ENCODE measurements at regions of chr17 and their contacts with region 1.

Region 1: GRCh38 chr17:57243171-57243948 is 13.0 kb upstream of the MSI2 start:
- DNase-seq: peak; percentile 82
- ATAC-seq: peak; percentile 94
- H3K4me3 Mint-ChIP-seq: no peak overlapping the region
- H3K27ac Mint-ChIP-seq: peak overlapping the region; percentile 40
- H3K4me1 Mint-ChIP-seq: peaks cover 3% of the 10 kb centered on the region
- H3K27me3 Mint-ChIP-seq: peaks cover 2% of the 10 kb centered on the region
- CTCF ChIP-seq: peak; percentile 100

Region 2: DNA sequence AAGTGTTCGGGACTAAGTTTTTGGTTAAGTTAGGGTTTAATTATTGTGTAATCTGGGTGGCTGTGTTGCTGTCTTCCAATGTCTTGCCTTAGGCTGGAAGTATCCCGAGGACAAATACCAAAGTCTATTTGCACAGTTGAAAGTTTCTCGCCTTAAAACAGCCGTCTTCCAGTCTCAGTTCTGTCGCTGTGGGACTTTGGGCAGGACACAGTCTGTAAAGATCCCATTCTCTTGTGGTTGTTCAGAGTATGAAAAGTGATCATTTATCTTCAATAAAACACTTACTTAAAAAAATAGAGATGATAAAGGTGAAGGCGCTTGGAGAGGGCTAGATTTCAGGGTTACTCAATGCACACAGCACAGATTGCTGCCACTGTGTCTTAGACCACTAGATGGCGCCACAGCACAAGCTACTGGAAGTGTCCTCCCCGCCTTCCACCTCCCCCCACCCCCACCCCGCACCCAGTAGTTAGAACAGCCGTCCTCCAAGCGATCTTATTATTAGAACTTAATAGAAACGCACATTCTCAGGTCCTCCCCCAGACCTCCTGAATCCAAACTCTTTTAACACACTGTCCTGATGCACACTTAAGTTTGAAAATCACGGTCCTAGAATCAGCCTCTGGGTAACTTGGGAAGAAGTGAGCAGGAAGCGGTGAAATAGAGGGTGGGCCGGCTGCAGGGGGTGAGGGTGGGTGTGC is 112.4 kb before region 1 on chr17:
- CTCF ChIA-PET with region 1: interaction called, 12 read pairs
- POLR2A ChIA-PET with region 1: no interaction called
- intact Hi-C with region 1: no loop called
- DNase-seq: peak; percentile 90
- ATAC-seq: peak; percentile 91
- H3K4me3 Mint-ChIP-seq: no peak overlapping the region
- H3K27ac Mint-ChIP-seq: no peak overlapping the region
- H3K4me1 Mint-ChIP-seq: peaks cover 6% of the 10 kb centered on the region
- H3K27me3 Mint-ChIP-seq: no peaks in the 10 kb centered on the region
- CTCF ChIP-seq: peak; percentile 87

Region 3: DNA sequence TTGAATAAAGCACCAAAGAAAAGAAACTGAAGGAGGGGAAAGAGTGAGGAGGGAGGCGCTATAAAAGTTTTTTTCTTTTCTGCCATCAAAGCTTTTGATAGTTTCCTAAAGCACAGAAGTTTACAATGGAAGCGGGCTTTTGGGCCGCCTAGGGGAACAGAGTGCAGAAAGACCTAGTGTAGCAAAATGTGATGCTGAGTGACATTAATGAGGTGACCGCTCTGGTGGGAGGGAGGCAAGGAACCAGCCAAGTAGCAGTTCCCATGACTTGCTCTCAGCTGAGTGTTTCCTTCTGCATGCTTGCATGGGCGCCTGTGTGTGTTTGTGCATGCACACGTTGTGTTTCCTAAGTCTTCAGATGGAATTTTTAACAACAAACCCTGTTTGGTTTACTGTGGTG is 28.5 kb after region 1 on chr17:
- CTCF ChIA-PET with region 1: interaction called, 33 read pairs
- POLR2A ChIA-PET with region 1: no interaction called
- intact Hi-C with region 1: no loop called
- DNase-seq: no peak
- ATAC-seq: no peak
- H3K4me3 Mint-ChIP-seq: no peak overlapping the region
- H3K27ac Mint-ChIP-seq: no peak overlapping the region
- H3K4me1 Mint-ChIP-seq: peaks cover 45% of the 10 kb centered on the region
- H3K27me3 Mint-ChIP-seq: no peaks in the 10 kb centered on the region
- CTCF ChIP-seq: no peak

Region 4: GRCh38 chr17:57401556-57402488 is 158.5 kb after region 1 on chr17:
- CTCF ChIA-PET with region 1: interaction called, 32 read pairs
- POLR2A ChIA-PET with region 1: no interaction called
- intact Hi-C with region 1: no loop called
- DNase-seq: no peak
- ATAC-seq: no peak
- H3K4me3 Mint-ChIP-seq: no peak overlapping the region
- H3K27ac Mint-ChIP-seq: no peak overlapping the region
- H3K4me1 Mint-ChIP-seq: peaks cover 12% of the 10 kb centered on the region
- H3K27me3 Mint-ChIP-seq: no peaks in the 10 kb centered on the region
- CTCF ChIP-seq: no peak

Region 5: GRCh38 chr17:57455063-57455914 is 211.9 kb after region 1 on chr17:
- CTCF ChIA-PET with region 1: interaction called, 17 read pairs
- POLR2A ChIA-PET with region 1: no interaction called
- intact Hi-C with region 1: no loop called
- DNase-seq: peak; percentile 81
- ATAC-seq: peak; percentile 73
- H3K4me3 Mint-ChIP-seq: peak overlapping the region; percentile 57
- H3K27ac Mint-ChIP-seq: peak overlapping the region; percentile 94
- H3K4me1 Mint-ChIP-seq: peaks cover 68% of the 10 kb centered on the region
- H3K27me3 Mint-ChIP-seq: no peaks in the 10 kb centered on the region
- CTCF ChIP-seq: no peak

Region 6: GRCh38 chr17:57552114-57552624 is 308.8 kb after region 1 on chr17:
- CTCF ChIA-PET with region 1: interaction called, 10 read pairs
- POLR2A ChIA-PET with region 1: no interaction called
- intact Hi-C with region 1: no loop called
- DNase-seq: peak; percentile 60
- ATAC-seq: peak; percentile 79
- H3K4me3 Mint-ChIP-seq: no peak overlapping the region
- H3K27ac Mint-ChIP-seq: no peak overlapping the region
- H3K4me1 Mint-ChIP-seq: peaks cover 36% of the 10 kb centered on the region
- H3K27me3 Mint-ChIP-seq: no peaks in the 10 kb centered on the region
- CTCF ChIP-seq: peak; percentile 48

Region 7: DNA sequence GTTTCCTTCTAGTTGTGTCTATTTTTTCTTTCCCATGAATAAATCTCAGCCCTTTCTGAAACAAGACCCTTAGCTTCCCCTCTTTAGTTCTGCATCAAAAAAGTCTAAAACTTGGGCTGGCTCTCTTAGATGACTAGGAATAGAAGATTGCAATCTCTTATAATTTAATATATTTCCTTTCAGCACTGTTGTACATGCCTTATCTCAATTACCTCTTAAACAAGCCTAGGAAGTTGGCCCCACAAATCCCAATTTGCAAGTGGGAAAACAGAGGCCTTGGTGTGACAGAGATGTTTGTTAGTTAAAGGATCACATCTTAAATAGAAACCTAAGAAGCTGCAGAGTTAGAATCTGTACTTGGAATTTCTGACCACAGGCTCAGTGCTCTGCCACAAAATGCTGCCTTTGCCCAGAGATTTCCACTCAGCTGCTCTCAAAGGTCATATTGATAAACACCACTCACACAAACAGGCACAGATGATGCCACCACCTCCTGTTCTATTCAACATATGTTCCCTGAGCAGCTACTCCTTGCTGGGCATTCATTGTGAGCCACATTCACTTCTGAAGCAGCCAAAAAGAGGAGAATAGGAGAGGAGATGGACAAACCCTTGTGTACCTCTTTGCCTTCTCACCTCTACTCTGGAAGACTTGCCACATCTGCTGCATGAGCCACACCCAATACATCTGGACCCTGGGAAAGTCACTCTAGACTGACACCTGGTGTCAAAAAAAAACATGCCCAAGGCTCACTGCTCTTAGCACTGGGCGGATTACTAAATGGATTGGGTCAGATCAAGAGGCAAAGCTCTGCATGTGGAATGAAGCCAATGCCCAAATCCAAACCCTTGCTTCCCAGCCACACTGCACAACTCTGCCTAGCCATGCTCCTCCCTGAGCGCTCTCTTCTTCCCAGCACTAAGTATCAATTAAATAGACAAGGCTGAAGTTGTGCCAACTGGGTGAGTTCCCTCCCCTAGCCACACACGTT is 496.3 kb after region 1 on chr17:
- CTCF ChIA-PET with region 1: interaction called, 31 read pairs
- POLR2A ChIA-PET with region 1: no interaction called
- intact Hi-C with region 1: no loop called
- DNase-seq: peak; percentile 18
- ATAC-seq: peak; percentile 79
- H3K4me3 Mint-ChIP-seq: no peak overlapping the region
- H3K27ac Mint-ChIP-seq: no peak overlapping the region
- H3K4me1 Mint-ChIP-seq: peaks cover 5% of the 10 kb centered on the region
- H3K27me3 Mint-ChIP-seq: no peaks in the 10 kb centered on the region
- CTCF ChIP-seq: peak; percentile 58

Measured in activated CD8-positive, alpha-beta T cell treated with anti-CD3 and anti-CD28 coated beads for 36 hours (primary cell).